ENCODE measurements at regions of chr2 and their contacts with region 1.

Region 1: GRCh38 chr2:137467246-137467862 is 496.9 kb upstream of the HNMT start:
- DNase-seq: peak; percentile 62
- H3K4me3 Mint-ChIP-seq: no peak overlapping the region
- H3K27ac Mint-ChIP-seq: no peak overlapping the region
- H3K4me1 Mint-ChIP-seq: no peaks in the 10 kb centered on the region
- H3K27me3 Mint-ChIP-seq: no peaks in the 10 kb centered on the region
- CTCF ChIP-seq: no peak

Region 2: GRCh38 chr2:136932700-136933099 is 534.7 kb before region 1 on chr2:
- CTCF ChIA-PET with region 1: no interaction called
- intact Hi-C with region 1: loop called (anchors 10 kb)
- DNase-seq: peak; percentile 30
- H3K4me3 Mint-ChIP-seq: no peak overlapping the region
- H3K27ac Mint-ChIP-seq: no peak overlapping the region
- H3K4me1 Mint-ChIP-seq: no peaks in the 10 kb centered on the region
- H3K27me3 Mint-ChIP-seq: no peaks in the 10 kb centered on the region
- CTCF ChIP-seq: peak; percentile 35

Region 3: GRCh38 chr2:137348296-137348695 is 119.1 kb before region 1 on chr2:
- CTCF ChIA-PET with region 1: no interaction called
- intact Hi-C with region 1: no loop called
- DNase-seq: no peak
- H3K4me3 Mint-ChIP-seq: no peak overlapping the region
- H3K27ac Mint-ChIP-seq: no peak overlapping the region
- H3K4me1 Mint-ChIP-seq: no peaks in the 10 kb centered on the region
- H3K27me3 Mint-ChIP-seq: no peaks in the 10 kb centered on the region
- CTCF ChIP-seq: no peak

Region 4: DNA sequence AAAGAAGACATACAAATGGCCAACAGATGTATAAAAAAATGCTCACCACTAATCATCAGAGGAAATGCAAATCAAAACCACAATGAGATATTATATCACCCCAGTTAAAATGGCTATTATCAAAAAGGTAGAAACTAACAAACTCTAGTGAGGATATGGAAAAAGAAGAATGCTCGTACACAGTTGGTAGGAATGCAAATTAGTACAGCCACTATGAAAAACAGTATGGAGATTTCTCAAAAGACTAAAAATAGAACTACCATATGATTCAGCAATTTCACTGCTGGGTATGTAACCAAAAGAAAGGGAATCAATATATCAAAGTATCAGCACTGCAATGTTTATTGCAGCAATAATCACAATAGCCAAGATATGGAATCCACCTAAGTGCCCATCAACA is 22.4 kb before region 1 on chr2:
- CTCF ChIA-PET with region 1: no interaction called
- intact Hi-C with region 1: no loop called
- DNase-seq: no peak
- H3K4me3 Mint-ChIP-seq: no peak overlapping the region
- H3K27ac Mint-ChIP-seq: no peak overlapping the region
- H3K4me1 Mint-ChIP-seq: no peaks in the 10 kb centered on the region
- H3K27me3 Mint-ChIP-seq: no peaks in the 10 kb centered on the region
- CTCF ChIP-seq: no peak

Region 5: GRCh38 chr2:137511526-137511925 is 44.2 kb after region 1 on chr2:
- CTCF ChIA-PET with region 1: interaction called, 7 read pairs
- intact Hi-C with region 1: loop called (anchors 5 kb)
- DNase-seq: no peak
- H3K4me3 Mint-ChIP-seq: no peak overlapping the region
- H3K27ac Mint-ChIP-seq: no peak overlapping the region
- H3K4me1 Mint-ChIP-seq: no peaks in the 10 kb centered on the region
- H3K27me3 Mint-ChIP-seq: no peaks in the 10 kb centered on the region
- CTCF ChIP-seq: no peak

Region 6: DNA sequence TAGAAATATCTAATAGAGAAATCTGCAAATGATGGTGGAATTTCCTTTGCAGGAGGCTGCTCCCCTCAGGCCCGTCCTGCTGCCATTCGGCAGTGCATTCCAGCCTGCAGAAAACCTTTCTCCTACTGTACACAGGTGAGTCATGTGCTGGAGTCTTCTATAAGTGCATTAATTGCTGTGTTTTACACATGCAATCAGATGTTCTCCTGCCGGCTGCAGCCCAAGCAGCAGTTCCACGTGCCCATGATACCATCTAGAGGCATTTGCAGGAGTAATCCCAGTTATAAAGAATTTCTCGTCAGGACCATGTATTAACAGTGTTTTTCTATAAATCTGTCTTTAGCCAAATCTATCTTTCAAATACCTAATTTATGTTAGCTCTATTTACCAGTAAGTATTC is 192.3 kb after region 1 on chr2:
- CTCF ChIA-PET with region 1: no interaction called
- intact Hi-C with region 1: loop called (anchors 5 kb)
- DNase-seq: peak; percentile 46
- H3K4me3 Mint-ChIP-seq: no peak overlapping the region
- H3K27ac Mint-ChIP-seq: no peak overlapping the region
- H3K4me1 Mint-ChIP-seq: no peaks in the 10 kb centered on the region
- H3K27me3 Mint-ChIP-seq: no peaks in the 10 kb centered on the region
- CTCF ChIP-seq: no peak

Region 7: DNA sequence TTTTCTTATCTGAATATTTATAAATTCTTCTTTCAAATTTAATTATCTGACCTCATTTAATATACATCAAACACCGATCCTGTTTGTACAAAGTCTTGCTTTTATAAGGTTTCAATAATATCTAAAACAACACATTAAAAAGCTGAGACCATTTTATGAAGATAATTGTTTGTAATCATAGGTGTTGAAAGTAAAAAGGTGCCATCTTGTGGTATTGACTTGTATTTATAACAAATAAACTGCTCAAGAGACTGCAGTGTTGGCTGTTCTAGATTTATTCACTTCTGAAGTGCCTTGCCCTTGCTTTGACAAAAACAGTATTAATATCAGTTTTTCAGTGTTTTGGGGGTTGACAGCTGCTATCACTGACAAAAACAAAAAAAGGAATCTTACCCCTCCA is 210.1 kb after region 1 on chr2:
- CTCF ChIA-PET with region 1: no interaction called
- intact Hi-C with region 1: loop called (anchors 5 kb)
- DNase-seq: no peak
- H3K4me3 Mint-ChIP-seq: no peak overlapping the region
- H3K27ac Mint-ChIP-seq: no peak overlapping the region
- H3K4me1 Mint-ChIP-seq: peaks cover 18% of the 10 kb centered on the region
- H3K27me3 Mint-ChIP-seq: no peaks in the 10 kb centered on the region
- CTCF ChIP-seq: no peak

Region 8: GRCh38 chr2:137706786-137707613 is 239.6 kb after region 1 on chr2:
- CTCF ChIA-PET with region 1: no interaction called
- intact Hi-C with region 1: no loop called
- DNase-seq: peak; percentile 89
- H3K4me3 Mint-ChIP-seq: peak overlapping the region; percentile 17
- H3K27ac Mint-ChIP-seq: peak overlapping the region; percentile 71
- H3K4me1 Mint-ChIP-seq: peaks cover 26% of the 10 kb centered on the region
- H3K27me3 Mint-ChIP-seq: no peaks in the 10 kb centered on the region
- CTCF ChIP-seq: no peak

Measured in Calu3 (cell line).